PC-3 (cell line): ENCODE measurements at regions of chr19 and their contacts with region 1.

Region 1: DNA sequence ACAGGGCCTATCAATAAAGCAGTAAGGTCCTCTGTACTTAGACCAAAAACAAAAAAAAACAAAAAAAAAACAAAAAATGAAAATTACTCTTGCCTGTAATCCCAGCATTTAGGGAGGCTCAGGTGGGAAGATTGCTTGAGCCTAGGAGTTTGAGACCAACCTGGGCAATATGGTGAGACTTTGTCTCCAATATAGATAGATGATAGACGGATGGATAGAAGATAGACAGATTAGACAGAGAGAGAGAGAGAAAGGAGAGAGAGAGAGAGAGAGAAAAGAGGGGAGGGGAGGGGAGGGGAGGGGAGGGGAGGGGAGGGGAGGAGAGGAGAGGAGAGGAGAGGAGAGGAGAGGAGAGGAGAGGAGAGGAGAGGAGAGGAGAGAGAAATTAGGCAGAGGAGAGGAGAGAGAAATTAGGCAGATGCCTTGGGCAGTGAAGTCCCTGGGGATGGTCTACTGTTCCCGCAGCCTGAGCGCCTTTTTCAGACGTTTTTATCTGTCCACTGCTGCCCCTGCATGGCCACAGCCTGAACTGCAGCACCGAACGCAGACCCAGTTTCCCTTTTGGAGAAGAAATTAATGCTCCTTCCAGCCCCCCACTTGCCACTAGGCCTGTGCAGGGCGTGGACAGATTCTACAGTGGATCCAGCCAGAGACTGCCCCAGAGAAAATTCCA is 9.8 kb upstream of the ZNF627 start:
- DNase-seq: peak; percentile 85
- ATAC-seq: peak; percentile 92
- H3K4me3 ChIP-seq: peak overlapping the region; percentile 62
- H3K27ac ChIP-seq: no peak overlapping the region
- H3K4me1 ChIP-seq: 0 out of 2 replicates have a peak, but pooled peaks cover 5% of the 10 kb centered on the region
- H3K27me3 ChIP-seq: no peaks in the 10 kb centered on the region
- CTCF ChIP-seq: peak; percentile 93

Region 2: DNA sequence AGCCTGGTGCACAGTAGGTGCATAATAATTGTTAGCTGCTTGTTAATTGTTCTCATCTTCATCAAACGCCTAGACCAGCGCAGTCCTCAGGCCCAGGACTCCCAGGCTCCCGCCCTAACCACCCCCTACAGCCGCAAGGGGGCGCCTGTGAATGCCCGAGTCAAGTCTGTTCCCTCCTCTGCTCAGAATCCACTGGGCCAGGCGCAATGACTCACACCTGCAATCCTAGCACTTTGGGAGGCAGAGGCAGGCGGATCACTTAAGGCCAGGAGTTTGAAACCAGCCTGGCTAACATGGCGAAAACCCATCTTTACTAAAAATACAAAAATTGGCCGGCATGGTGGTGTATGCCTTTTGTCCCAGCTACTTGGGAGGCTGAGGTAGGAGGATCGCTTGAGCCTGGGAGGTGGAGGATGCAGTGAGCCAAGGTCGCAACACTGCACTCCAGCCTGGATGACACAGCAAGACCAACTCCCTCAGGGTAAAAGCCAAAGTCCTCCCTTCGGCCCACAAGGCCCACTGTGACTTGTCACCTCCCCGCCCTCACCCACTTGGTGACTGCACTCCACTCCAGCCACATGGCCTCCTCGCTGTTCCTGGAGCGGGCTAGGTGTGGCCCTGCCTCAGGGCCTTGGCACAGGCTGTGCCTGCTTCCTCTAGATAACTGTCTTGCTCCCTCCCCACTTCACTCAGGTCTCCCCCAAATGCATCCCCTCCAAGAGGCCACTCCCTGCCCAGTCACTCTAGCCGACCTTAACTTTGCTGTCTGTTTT is 90.9 kb before region 1 on chr19:
- CTCF ChIA-PET with region 1: no interaction called
- POLR2A ChIA-PET with region 1: no interaction called
- intact Hi-C with region 1: loop called (anchors 5 kb)
- DNase-seq: peak; percentile 84
- ATAC-seq: peak; percentile 99
- H3K4me3 ChIP-seq: no peak overlapping the region
- H3K27ac ChIP-seq: no peak overlapping the region
- H3K4me1 ChIP-seq: no peaks in the 10 kb centered on the region
- H3K27me3 ChIP-seq: no peaks in the 10 kb centered on the region
- CTCF ChIP-seq: peak; percentile 92

Region 3: DNA sequence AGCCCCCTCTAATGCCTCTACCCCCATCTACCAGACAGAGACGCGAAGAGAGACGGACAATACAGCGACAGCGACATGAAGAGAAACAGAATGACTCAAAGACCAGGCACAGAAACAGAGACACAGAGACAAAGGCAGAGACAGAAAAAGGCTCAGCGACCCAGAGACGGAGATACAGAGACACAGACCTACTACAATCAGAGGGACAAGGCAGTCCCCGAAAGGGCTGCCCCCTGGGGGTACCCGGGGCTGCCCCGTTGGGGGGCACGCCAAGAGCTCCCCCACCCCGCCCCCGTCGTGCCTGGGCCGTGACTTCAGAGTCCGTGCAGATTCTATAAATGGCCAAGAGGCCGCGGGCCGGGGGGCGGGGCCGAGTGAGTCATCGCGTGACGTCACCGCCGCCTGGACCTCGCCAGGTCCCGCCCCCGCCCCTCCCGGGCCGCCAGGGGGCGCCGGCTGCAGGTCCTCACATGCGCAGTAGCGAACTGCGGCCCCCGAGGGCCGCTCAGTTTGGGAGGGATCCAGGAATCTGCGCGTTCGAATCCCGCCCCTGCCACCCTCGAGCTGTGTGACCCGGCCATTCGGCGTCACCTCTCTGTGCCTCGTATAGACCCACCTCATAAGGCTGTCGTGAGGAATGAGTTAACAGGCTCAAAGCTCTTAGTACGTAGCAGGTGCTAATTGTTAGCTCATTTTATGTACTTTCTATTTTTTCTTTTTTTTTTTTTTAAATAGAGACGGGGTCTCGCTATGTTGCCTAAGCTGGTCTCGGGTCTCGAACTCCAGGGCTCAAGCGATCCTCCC is 51.4 kb before region 1 on chr19:
- CTCF ChIA-PET with region 1: no interaction called
- POLR2A ChIA-PET with region 1: interaction called, 5 read pairs
- intact Hi-C with region 1: loop called (anchors 5 kb)
- DNase-seq: peak; percentile 93
- ATAC-seq: peak; percentile 58
- H3K4me3 ChIP-seq: peak overlapping the region; percentile 52; the same call in 1 of the 2 replicates
- H3K27ac ChIP-seq: peak overlapping the region; percentile 8; the same call in 1 of the 2 replicates
- H3K4me1 ChIP-seq: peaks cover 21% of the 10 kb centered on the region
- H3K27me3 ChIP-seq: no peaks in the 10 kb centered on the region
- CTCF ChIP-seq: peak; percentile 95

Region 4: DNA sequence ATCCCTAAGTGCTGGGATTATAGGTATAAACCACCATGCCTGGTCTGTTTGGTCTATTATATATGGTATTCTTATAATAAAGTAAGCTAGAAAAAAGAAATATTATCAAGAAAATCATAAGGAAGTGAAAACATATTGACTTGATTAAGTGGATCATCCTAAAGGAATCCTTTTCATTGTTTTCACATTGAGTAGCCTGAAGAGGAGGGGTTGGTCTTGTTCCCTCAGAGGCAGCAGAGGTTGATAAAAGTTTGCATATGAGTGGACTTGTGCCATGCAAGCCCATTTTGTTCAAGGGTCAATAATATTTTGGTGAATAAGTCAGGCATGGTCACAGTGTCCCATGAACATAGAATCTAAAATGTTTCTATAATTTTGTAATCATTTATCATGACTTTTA is 62.5 kb after region 1 on chr19:
- CTCF ChIA-PET with region 1: no interaction called
- POLR2A ChIA-PET with region 1: no interaction called
- intact Hi-C with region 1: no loop called
- DNase-seq: no peak
- ATAC-seq: no peak
- H3K4me3 ChIP-seq: no peak overlapping the region
- H3K27ac ChIP-seq: no peak overlapping the region
- H3K4me1 ChIP-seq: no peaks in the 10 kb centered on the region
- H3K27me3 ChIP-seq: no peaks in the 10 kb centered on the region
- CTCF ChIP-seq: no peak